Activated CD4-positive, alpha-beta memory T cell treated with anti-CD3 and anti-CD28 coated beads, Interleukin-2, amount 10 ng/mL, durations not matched to agents 7 days and 5 days (primary cell): ENCODE measurements at regions of chr7 and their contacts with region 1.

Region 1: DNA sequence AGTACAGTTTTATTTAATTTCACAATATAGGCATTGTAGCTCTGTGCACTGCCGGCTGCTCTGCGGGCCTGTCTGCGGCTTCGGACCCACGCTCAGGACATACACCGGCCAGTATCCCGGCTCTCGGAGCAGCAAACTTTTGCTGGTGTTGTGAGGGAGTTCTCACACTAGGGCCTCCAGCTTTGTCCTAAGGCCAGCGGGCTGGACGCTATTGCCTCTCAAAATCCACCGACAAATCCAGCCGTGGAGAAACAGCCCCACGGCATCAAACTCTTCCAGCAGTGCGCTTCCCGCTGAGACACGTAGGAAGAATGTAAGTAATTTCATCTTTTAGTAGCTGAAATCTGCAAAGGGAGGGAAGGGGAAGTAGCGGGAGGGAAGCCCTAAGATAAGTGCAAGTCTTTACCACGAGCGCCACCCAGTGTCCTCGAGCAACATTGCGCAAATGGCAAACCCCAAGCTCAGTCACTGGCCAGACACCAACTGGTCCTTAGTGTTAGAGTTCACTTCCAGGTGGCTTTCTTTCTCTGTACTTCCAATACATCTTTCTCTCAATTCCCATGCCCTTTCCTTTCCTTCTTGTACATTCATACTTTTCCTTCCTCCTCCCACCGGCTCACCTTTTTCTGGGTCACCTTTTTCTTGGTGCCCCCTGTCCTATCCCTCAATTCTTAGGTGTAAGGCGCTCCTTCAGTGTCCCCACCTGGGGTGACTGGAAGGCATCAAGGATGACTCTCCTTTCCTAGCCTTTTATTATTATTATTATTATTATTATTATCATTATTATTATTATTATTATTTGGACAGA is 3.0 kb upstream of the DLX5 start:
- DNase-seq: peak; percentile 67
- H3K4me3 Mint-ChIP-seq: peak overlapping the region; percentile 17
- H3K27ac Mint-ChIP-seq: no peak overlapping the region
- H3K4me1 Mint-ChIP-seq: peaks cover 17% of the 10 kb centered on the region
- H3K27me3 Mint-ChIP-seq: peaks cover 59% of the 10 kb centered on the region

Region 2: DNA sequence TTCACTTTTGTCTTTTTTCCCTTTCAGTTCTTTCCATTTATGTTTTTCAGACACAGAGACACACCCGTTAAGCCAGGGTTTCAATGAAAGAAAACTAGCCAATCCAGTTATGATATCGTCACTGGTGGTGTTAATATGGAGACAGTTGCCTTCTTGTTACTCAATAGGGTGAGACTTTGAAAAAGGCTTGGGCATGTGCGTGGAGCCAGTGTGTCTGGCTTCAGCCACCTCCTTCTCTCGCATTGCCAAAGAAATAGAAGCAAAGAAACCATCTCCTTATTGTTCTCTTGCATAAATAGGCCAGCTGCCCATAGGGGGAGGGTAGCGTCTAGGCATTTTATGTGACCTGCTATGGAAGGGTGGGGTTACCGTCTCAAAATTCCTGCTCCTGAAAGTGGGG is 106.4 kb before region 1 on chr7:
- CTCF ChIA-PET with region 1: no interaction called
- POLR2A ChIA-PET with region 1: no interaction called
- DNase-seq: no peak
- H3K4me3 Mint-ChIP-seq: no peak overlapping the region
- H3K27ac Mint-ChIP-seq: no peak overlapping the region
- H3K4me1 Mint-ChIP-seq: no peaks in the 10 kb centered on the region
- H3K27me3 Mint-ChIP-seq: peaks cover 4% of the 10 kb centered on the region

Region 3: GRCh38 chr7:96992192-96993005 is 35.2 kb before region 1 on chr7:
- CTCF ChIA-PET with region 1: interaction called, 10 read pairs
- POLR2A ChIA-PET with region 1: no interaction called
- DNase-seq: no peak
- H3K4me3 Mint-ChIP-seq: no peak overlapping the region
- H3K27ac Mint-ChIP-seq: no peak overlapping the region
- H3K4me1 Mint-ChIP-seq: no peaks in the 10 kb centered on the region
- H3K27me3 Mint-ChIP-seq: peaks cover 81% of the 10 kb centered on the region